Pancreas (tissue), 10 donors: ENCODE measurements at regions of chr3 and their contacts with region 1.

Region 1: DNA sequence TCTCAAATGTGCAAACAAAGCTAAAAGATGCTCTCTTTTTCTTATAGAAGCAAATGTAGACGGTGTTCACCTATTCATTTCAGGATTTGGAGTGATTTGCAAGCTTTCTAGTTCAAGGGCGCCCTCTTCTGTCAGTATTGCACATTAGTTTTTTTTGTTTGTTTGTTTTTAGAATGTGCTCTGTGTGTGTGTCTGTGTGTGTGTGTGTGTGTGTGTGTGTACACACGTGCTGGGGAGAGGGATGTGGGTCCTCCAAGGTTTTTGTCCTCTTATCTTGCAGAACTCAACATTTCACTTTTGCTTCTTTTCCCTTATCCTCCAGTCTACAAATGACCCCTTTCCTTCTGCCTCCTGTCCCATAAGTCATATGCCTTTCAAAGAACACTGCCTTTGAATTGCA is 23.5 kb downstream of the DNAH1 start:
- DNase-seq: peak in 3 of 6 donors; percentile 39 to 51 (median 43)
- ATAC-seq: peak; percentile 55 to 94 (median 90)
- H3K4me3 ChIP-seq: no peak overlapping the region
- H3K27ac ChIP-seq: no peak overlapping the region
- H3K4me1 ChIP-seq: no peaks in the 10 kb centered on the region
- H3K27me3 ChIP-seq: no peaks in the 10 kb centered on the region
- CTCF ChIP-seq: peak in 3 of 4 donors; percentile 21 to 49 (median 41)

Region 2: DNA sequence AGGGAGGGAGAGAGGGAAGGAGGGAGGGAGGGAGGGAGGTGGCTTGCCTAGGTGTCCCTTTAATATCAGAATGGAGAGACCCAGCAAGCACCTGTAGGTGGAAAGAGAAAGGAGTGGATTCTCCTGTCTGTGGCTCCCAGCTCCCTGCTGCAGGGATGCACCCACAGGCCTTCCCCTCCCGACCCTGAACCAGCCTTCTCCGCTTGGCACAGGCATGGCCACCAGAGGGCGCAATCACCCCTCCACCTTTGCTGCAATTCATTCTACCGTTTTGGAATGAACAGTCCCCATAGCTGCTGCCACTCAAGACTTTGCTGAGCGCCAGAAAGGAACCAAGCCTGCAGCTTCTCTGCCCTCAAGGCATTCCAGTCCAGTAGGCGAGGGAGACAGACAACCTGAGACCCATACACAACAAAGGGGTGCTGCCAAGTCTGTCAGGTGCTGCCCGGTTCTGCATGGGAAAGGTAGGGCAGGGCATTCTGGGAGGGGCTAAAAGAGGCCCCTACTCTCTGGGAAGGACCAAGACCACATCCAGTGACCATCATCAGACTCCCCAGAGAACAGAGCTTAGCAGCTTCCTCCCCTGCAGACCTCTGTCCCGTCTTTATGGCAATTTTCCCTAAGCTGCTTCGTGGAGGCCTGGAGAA is 119.1 kb before region 1 on chr3:
- intact Hi-C with region 1: loop called in 2 of 3 experiments (anchors 5 kb)
- DNase-seq: peak; percentile 67 to 95 (median 85)
- ATAC-seq: peak; percentile 33 to 74 (median 72)
- H3K4me3 ChIP-seq: no peak overlapping the region
- H3K27ac ChIP-seq: no peak overlapping the region
- H3K4me1 ChIP-seq: peaks cover 13 to 16% (median 15%) of the 10 kb centered on the region in 3 donors
- H3K27me3 ChIP-seq: no peaks in the 10 kb centered on the region
- CTCF ChIP-seq: peak; percentile 80 to 95 (median 85)

Region 3: GRCh38 chr3:52231502-52232293 is 107.9 kb before region 1 on chr3:
- intact Hi-C with region 1: loop called in 1 of 3 experiments (anchors 5 kb)
- DNase-seq: peak; percentile 63 to 95 (median 87)
- ATAC-seq: peak; percentile 66 to 90 (median 84)
- H3K4me3 ChIP-seq: no peak overlapping the region
- H3K27ac ChIP-seq: no peak overlapping the region
- H3K4me1 ChIP-seq: peaks cover 0 to 5% (median 4%) of the 10 kb centered on the region in 3 donors
- H3K27me3 ChIP-seq: no peaks in the 10 kb centered on the region
- CTCF ChIP-seq: peak; percentile 87 to 92 (median 90)

Region 4: DNA sequence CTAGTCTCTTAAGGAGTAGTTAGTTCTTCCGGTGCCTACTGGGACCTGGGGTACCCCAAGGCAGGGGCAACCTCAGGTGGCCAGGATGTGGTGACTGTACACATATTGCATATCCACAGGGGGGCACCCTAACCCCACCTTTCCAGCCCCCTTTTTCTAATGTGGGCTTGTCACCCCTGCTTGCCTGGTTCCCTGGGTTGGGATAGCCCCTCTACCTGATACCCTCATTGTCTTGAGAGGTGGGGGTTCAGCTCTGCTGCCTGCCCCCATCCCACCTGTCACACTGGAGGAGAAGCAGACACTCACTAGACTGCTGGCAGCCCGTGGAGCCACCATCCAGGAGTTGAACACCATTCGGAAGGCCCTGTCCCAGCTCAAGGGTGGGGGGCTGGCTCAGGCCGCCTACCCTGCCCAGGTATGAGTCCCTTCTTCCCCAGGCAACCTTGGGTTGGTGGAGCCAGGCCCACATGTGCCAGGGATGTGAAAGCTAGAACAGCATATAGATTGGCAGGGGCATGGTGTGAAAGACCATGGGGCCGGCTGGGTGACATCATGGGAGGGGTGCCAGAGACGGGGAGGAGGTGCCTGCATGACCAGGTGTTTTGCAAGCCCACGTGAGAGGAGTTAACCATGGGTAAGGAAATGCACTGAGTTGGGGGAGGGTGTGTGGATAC is 48.0 kb before region 1 on chr3:
- intact Hi-C with region 1: loop called in 1 of 3 experiments (anchors 5 kb)
- DNase-seq: peak in 4 of 6 donors; percentile 38 to 71 (median 50)
- ATAC-seq: no peak
- H3K4me3 ChIP-seq: no peak overlapping the region
- H3K27ac ChIP-seq: no peak overlapping the region
- H3K4me1 ChIP-seq: peaks cover 28 to 36% (median 31%) of the 10 kb centered on the region in 3 donors
- H3K27me3 ChIP-seq: no peaks in the 10 kb centered on the region
- CTCF ChIP-seq: peak in 3 of 4 donors; percentile 16 to 34 (median 31)